Endothelial cell of umbilical vein (primary cell): ENCODE measurements at regions of chr21 and their contacts with region 1.

Region 1: GRCh38 chr21:32597205-32597604 is 11.9 kb upstream of the TCP10L start:
- DNase-seq: peak; percentile 85
- H3K4me3 ChIP-seq: no peak overlapping the region
- H3K27ac ChIP-seq: peak overlapping the region; percentile 68
- H3K4me1 ChIP-seq: peaks cover 9% of the 10 kb centered on the region
- H3K27me3 ChIP-seq: no peaks in the 10 kb centered on the region
- CTCF ChIP-seq: no peak
- POLR2A ChIP-seq: no peak

Region 2: GRCh38 chr21:31786164-31786920 is 810.9 kb before region 1 on chr21:
- CTCF ChIA-PET with region 1: interaction called, 13 read pairs
- POLR2A ChIA-PET with region 1: no interaction called
- dilution Hi-C with region 1: no loop called
- intact Hi-C with region 1: loop called (anchors 5 kb)
- DNase-seq: no peak
- H3K4me3 ChIP-seq: no peak overlapping the region
- H3K27ac ChIP-seq: no peak overlapping the region
- H3K4me1 ChIP-seq: no peaks in the 10 kb centered on the region
- H3K27me3 ChIP-seq: no peaks in the 10 kb centered on the region
- CTCF ChIP-seq: no peak
- POLR2A ChIP-seq: no peak

Region 3: GRCh38 chr21:32278518-32279376 is 318.5 kb before region 1 on chr21 and contains the start of gene MIS18A:
- CTCF ChIA-PET with region 1: interaction called, 7 read pairs
- POLR2A ChIA-PET with region 1: no interaction called
- dilution Hi-C with region 1: no loop called
- intact Hi-C with region 1: loop called (anchors 1 kb)
- DNase-seq: peak; percentile 97
- H3K4me3 ChIP-seq: peak within 1 kb of the TSS; percentile 63 to 90 (median 87)
- H3K27ac ChIP-seq: peak within 1 kb of the TSS; percentile 31
- H3K4me1 ChIP-seq: peaks cover 16% of the 10 kb centered on the region
- H3K27me3 ChIP-seq: no peaks in the 10 kb centered on the region
- CTCF ChIP-seq: no peak
- POLR2A ChIP-seq: peak; percentile 84
- total RNA-seq, gene MIS18A: 19.4 and 19.7 TPM in 2 replicates

Region 4: GRCh38 chr21:32371913-32372314 is 225.3 kb before region 1 on chr21:
- CTCF ChIA-PET with region 1: interaction called, 38 read pairs
- POLR2A ChIA-PET with region 1: no interaction called
- dilution Hi-C with region 1: no loop called
- intact Hi-C with region 1: no loop called
- DNase-seq: peak; percentile 98
- H3K4me3 ChIP-seq: no peak overlapping the region
- H3K27ac ChIP-seq: peak overlapping the region; percentile 93
- H3K4me1 ChIP-seq: peaks cover 29% of the 10 kb centered on the region
- H3K27me3 ChIP-seq: no peaks in the 10 kb centered on the region
- CTCF ChIP-seq: no peak
- POLR2A ChIP-seq: peak; percentile 43

Region 5: GRCh38 chr21:32412162-32413014 is 184.8 kb before region 1 on chr21 and contains the start of gene EVA1C:
- CTCF ChIA-PET with region 1: interaction called, 286 read pairs
- POLR2A ChIA-PET with region 1: no interaction called
- dilution Hi-C with region 1: no loop called
- intact Hi-C with region 1: loop called (anchors 1 kb)
- DNase-seq: peak; percentile 69
- H3K4me3 ChIP-seq: peak within 1 kb of the TSS; percentile 46 to 81 (median 73)
- H3K27ac ChIP-seq: peak within 1 kb of the TSS; percentile 99
- H3K4me1 ChIP-seq: peaks cover 35% of the 10 kb centered on the region
- H3K27me3 ChIP-seq: no peaks in the 10 kb centered on the region
- CTCF ChIP-seq: peak in 1 of 2 donors; percentile 11
- POLR2A ChIP-seq: no peak
- total RNA-seq, gene EVA1C: 31.7 and 38.6 TPM in 2 replicates

Region 6: GRCh38 chr21:32612075-32612998 is 15.1 kb after region 1 on chr21 and contains the start of gene CFAP298:
- CTCF ChIA-PET with region 1: interaction called, 29 read pairs
- POLR2A ChIA-PET with region 1: no interaction called
- dilution Hi-C with region 1: no loop called
- intact Hi-C with region 1: no loop called
- DNase-seq: peak; percentile 92
- H3K4me3 ChIP-seq: peak within 1 kb of the TSS; percentile 74 to 99 (median 95)
- H3K27ac ChIP-seq: peak within 1 kb of the TSS; percentile 79
- H3K4me1 ChIP-seq: peaks cover 10% of the 10 kb centered on the region
- H3K27me3 ChIP-seq: no peaks in the 10 kb centered on the region
- CTCF ChIP-seq: no peak
- POLR2A ChIP-seq: peak; percentile 91
- total RNA-seq, gene CFAP298: 36.0 and 44.1 TPM in 2 replicates

Region 7: GRCh38 chr21:32653311-32653901 is 56.2 kb after region 1 on chr21:
- CTCF ChIA-PET with region 1: no interaction called
- POLR2A ChIA-PET with region 1: no interaction called
- dilution Hi-C with region 1: no loop called
- intact Hi-C with region 1: no loop called
- DNase-seq: peak; percentile 59
- H3K4me3 ChIP-seq: no peak overlapping the region
- H3K27ac ChIP-seq: no peak overlapping the region
- H3K4me1 ChIP-seq: no peaks in the 10 kb centered on the region
- H3K27me3 ChIP-seq: no peaks in the 10 kb centered on the region
- CTCF ChIP-seq: peak; percentile 54 to 69
- POLR2A ChIP-seq: no peak

Region 8: GRCh38 chr21:32921632-32922230 is 324.5 kb after region 1 on chr21:
- CTCF ChIA-PET with region 1: no interaction called
- POLR2A ChIA-PET with region 1: no interaction called
- dilution Hi-C with region 1: no loop called
- intact Hi-C with region 1: no loop called
- DNase-seq: peak; percentile 6
- H3K4me3 ChIP-seq: no peak overlapping the region
- H3K27ac ChIP-seq: no peak overlapping the region
- H3K4me1 ChIP-seq: no peaks in the 10 kb centered on the region
- H3K27me3 ChIP-seq: peaks cover 4 to 7% of the 10 kb centered on the region in 2 experiments
- CTCF ChIP-seq: peak; percentile 61 to 65
- POLR2A ChIP-seq: no peak